ENCODE measurements at regions of chr9 and their contacts with region 1.

Region 1: GRCh38 chr9:131046581-131047202 is 37.7 kb downstream of the LAMC3 start:
- DNase-seq: peak; percentile 92

Region 2: DNA sequence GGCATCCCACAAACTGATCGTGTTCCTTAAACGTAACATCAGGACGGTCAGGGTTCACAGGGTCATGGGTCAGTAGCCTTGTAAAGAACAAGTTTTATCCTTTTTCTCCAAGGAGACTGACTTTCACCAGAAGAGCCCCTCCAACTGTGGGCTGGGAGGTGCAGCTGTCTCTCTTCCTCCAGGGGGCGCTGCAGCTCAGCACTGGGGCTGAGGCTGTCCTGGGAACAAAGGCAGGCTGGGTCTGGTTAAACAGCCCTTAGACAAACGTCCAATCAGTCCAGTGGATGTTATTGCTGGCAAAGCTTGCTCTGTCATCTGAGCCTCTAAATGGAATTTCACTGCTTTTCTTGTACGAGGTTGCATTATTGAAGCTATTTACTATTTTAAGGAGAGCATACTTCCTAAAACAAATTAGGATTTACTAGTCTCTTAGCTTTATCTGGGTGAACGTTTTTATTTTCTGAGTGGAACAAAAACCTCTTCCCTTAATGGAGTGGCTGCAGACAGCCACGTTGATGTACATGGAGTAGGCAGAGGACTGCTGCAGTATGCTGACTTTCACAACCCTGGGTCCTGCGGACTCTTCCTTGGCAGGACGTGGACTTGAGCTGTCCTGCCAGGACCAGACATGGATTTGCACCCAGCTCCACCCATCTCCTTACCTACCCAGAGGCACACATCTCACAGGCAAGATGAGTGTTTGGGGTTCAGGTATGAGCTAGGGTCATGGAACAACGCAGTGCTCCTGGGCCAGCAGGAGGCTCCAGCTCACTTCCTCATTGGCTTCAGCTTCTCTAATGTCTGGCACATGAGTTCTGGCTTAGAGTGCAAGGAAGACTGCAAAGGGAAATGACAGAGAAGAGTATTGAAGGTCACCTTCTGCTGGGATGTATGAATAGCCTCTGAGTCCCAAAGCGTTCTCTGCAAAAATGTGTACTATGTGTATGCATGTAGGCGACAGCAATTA is 345.4 kb before region 1 on chr9:
- intact Hi-C with region 1: loop called in 1 of 2 experiments (anchors 10 kb)
- DNase-seq: peak; percentile 94

Region 3: GRCh38 chr9:131012396-131012917 is 34.2 kb before region 1 on chr9:
- intact Hi-C with region 1: loop called in 1 of 2 experiments (anchors 5 kb)
- DNase-seq: no peak

Measured in posterior vena cava (tissue), 2 donors.